GM10248 (cell line): ENCODE measurements at regions of chr10 and their contacts with region 1.

Region 1: GRCh38 chr10:81179805-81180452 is 642.2 kb downstream of the SH2D4B start:
- DNase-seq: peak; percentile 35
- CTCF ChIP-seq: peak; percentile 64

Region 2: DNA sequence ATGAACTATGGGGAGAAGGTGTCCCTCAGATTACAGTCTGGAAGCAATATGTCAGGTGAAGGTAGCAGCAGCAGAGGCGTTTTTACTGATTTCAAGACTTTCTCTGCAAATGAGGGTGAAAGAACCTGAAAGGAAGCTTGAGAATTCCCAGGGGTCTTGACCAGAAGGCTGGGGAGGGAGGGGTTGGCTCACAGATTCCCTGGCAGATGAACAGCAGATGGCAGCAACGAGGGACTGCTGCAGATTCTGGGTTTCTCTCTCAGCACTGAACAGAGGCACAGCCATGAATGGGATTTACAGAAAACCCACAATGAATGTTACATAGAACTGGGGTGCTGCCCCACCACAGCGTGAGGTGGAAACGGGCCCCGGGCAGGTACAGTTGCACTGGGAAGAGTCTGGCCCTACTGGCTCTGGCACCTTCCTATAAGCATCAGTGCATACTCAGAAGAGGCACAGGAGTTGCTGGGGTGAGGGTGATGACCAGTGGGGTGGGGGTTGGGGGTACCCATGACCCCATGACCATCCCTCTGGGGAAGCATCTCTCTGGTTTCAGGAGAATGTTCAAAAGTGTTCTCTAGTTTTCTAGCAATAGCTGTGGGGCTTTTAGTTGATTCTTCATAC is 324.5 kb before region 1 on chr10:
- CTCF ChIA-PET with region 1: interaction called, 18 read pairs
- POLR2A ChIA-PET with region 1: no interaction called
- DNase-seq: peak; percentile 38
- CTCF ChIP-seq: peak; percentile 54

Region 3: DNA sequence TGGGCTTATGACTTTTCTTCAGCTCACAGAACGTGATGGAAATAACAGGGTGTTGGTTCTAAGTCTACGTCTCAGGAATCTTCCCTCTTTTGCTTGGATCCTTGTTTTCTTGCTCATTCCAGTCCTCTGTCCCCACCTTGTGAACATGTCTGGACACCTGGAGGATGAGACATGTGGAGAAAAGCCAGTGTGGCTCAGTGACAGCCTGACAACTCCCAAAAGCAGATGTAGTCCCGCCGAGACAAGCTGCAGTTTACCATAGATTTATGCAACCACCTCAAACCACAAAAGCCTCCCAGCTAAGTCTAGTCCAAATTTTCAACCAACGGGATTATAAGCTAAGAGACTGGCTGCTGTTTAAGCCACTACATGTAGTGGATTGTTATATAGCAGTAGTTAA is 166.2 kb before region 1 on chr10:
- CTCF ChIA-PET with region 1: interaction called, 10 read pairs
- POLR2A ChIA-PET with region 1: no interaction called
- DNase-seq: no peak
- CTCF ChIP-seq: no peak

Region 4: GRCh38 chr10:81081887-81082620 is 97.9 kb before region 1 on chr10:
- CTCF ChIA-PET with region 1: interaction called, 42 read pairs
- POLR2A ChIA-PET with region 1: no interaction called
- DNase-seq: peak; percentile 16
- CTCF ChIP-seq: peak; percentile 32

Region 5: GRCh38 chr10:81157681-81158080 is 22.2 kb before region 1 on chr10:
- CTCF ChIA-PET with region 1: interaction called, 43 read pairs
- POLR2A ChIA-PET with region 1: no interaction called
- DNase-seq: no peak
- CTCF ChIP-seq: no peak

Region 6: DNA sequence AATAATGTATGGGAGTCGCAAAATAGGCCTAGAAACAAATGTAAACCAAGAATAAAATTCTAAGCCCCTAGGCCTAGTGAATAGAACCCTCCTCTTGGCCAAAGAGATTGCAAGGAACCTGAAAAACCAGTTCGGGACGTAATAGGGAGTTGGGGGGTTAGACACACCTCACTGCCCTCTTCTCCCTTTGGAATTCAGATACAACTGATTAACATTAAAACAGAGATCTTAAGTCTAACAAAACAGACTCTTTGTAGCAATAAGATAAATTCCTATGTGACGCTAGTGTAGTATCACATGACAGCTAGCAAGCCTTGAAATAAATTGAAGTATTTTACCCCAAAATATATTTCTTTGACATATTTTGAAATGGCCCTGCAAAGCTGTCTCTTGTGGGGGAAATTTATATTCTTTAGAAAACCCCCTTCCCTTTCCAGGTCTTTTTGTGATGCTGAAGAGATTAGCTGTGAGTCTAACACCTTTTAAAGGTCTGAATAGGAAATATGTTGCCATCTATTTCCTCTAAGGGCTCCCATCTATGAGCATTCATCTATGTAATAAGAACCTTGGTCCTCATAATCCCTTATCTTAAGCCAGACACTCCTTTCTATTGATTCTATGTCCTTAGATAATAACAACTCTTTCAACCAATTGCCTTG is 71.7 kb after region 1 on chr10:
- CTCF ChIA-PET with region 1: no interaction called
- POLR2A ChIA-PET with region 1: no interaction called
- DNase-seq: no peak
- CTCF ChIP-seq: no peak